ENCODE measurements at regions of chr18 and their contacts with region 1.

Region 1: GRCh38 chr18:54466248-54467005 is 108.7 kb downstream of the C18orf54 start:
- ATAC-seq: no peak
- H3K4me3 ChIP-seq: no peak overlapping the region
- H3K27ac ChIP-seq: no peak overlapping the region
- H3K4me1 ChIP-seq: no peaks in the 10 kb centered on the region

Region 2: GRCh38 chr18:54805571-54806334 is 339.3 kb after region 1 on chr18:
- in situ Hi-C with region 1: no loop called
- ATAC-seq: peak in 7 of 8 experiments; percentile 22 to 78 (median 52)
- H3K4me3 ChIP-seq: no peak overlapping the region
- H3K27ac ChIP-seq: no peak overlapping the region
- H3K4me1 ChIP-seq: no peaks in the 10 kb centered on the region

Region 3: DNA sequence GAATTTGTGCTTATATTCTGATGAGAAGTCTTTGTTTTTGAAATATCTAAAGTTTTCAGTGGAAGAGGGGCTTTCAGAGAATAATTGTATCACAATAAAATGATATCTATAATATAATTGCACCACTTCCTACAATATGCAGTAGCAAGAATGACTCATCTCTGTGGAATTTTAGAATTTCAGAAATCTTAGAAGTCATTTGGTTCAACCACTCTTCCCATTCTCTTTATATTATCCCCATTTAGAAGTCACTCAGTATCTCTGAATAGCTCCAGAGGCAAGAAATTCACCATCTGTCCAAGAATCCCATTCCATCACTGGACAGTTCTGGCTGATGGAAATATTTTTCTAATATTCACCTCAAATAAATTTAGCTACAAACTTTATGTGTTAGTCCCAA is 552.2 kb after region 1 on chr18:
- in situ Hi-C with region 1: loop called in 1 of 9 experiments (anchors 25 kb)
- ATAC-seq: peak in 2 of 8 experiments; percentile 62 to 69
- H3K4me3 ChIP-seq: no peak overlapping the region
- H3K27ac ChIP-seq: no peak overlapping the region
- H3K4me1 ChIP-seq: no peaks in the 10 kb centered on the region

Measured in motor neuron (in vitro differentiated cells).